ENCODE measurements at regions of chr2 and their contacts with region 1.

Region 1: GRCh38 chr2:74168739-74169138 is 9.9 kb downstream of the MOB1A start:
- DNase-seq: no peak
- H3K4me3 Mint-ChIP-seq: no peak overlapping the region
- H3K27ac Mint-ChIP-seq: no peak overlapping the region
- H3K4me1 Mint-ChIP-seq: peaks cover 10% of the 10 kb centered on the region
- H3K27me3 Mint-ChIP-seq: no peaks in the 10 kb centered on the region
- CTCF ChIP-seq: no peak

Region 2: GRCh38 chr2:74119912-74120825 is 48.6 kb before region 1 on chr2:
- CTCF ChIA-PET with region 1: no interaction called
- POLR2A ChIA-PET with region 1: no interaction called
- intact Hi-C with region 1: no loop called
- DNase-seq: peak; percentile 71
- H3K4me3 Mint-ChIP-seq: peak overlapping the region; percentile 82
- H3K27ac Mint-ChIP-seq: peak overlapping the region; percentile 89
- H3K4me1 Mint-ChIP-seq: peaks cover 4% of the 10 kb centered on the region
- H3K27me3 Mint-ChIP-seq: no peaks in the 10 kb centered on the region
- CTCF ChIP-seq: peak; percentile 39

Region 3: GRCh38 chr2:74147727-74148456 is 20.8 kb before region 1 on chr2 and contains the start of gene BOLA3:
- CTCF ChIA-PET with region 1: interaction called, 12 read pairs
- POLR2A ChIA-PET with region 1: no interaction called
- intact Hi-C with region 1: no loop called
- DNase-seq: peak; percentile 80
- H3K4me3 Mint-ChIP-seq: no peak within 1 kb of the TSS
- H3K27ac Mint-ChIP-seq: no peak within 1 kb of the TSS
- H3K4me1 Mint-ChIP-seq: no peaks in the 10 kb centered on the region
- H3K27me3 Mint-ChIP-seq: no peaks in the 10 kb centered on the region
- CTCF ChIP-seq: peak; percentile 70
- total RNA-seq, gene BOLA3: 72.5 and 83.8 TPM in 2 replicates

Region 4: GRCh38 chr2:74152954-74153353 is 15.8 kb before region 1 on chr2:
- CTCF ChIA-PET with region 1: interaction called, 12 read pairs
- POLR2A ChIA-PET with region 1: interaction called, 3 read pairs
- intact Hi-C with region 1: no loop called
- DNase-seq: no peak
- H3K4me3 Mint-ChIP-seq: no peak overlapping the region
- H3K27ac Mint-ChIP-seq: no peak overlapping the region
- H3K4me1 Mint-ChIP-seq: no peaks in the 10 kb centered on the region
- H3K27me3 Mint-ChIP-seq: no peaks in the 10 kb centered on the region
- CTCF ChIP-seq: no peak